Breast epithelium (tissue), 4 donors: ENCODE measurements at regions of chr7 and their contacts with region 1.

Region 1: GRCh38 chr7:81865754-81866153 is 95.9 kb upstream of the HGF start:
- DNase-seq: no peak
- H3K4me3 ChIP-seq: no peak overlapping the region
- H3K27ac ChIP-seq: no peak overlapping the region
- H3K4me1 ChIP-seq: no peaks in the 10 kb centered on the region
- H3K27me3 ChIP-seq: no peaks in the 10 kb centered on the region
- CTCF ChIP-seq: no peak
- POLR2A ChIP-seq: no peak

Region 2: DNA sequence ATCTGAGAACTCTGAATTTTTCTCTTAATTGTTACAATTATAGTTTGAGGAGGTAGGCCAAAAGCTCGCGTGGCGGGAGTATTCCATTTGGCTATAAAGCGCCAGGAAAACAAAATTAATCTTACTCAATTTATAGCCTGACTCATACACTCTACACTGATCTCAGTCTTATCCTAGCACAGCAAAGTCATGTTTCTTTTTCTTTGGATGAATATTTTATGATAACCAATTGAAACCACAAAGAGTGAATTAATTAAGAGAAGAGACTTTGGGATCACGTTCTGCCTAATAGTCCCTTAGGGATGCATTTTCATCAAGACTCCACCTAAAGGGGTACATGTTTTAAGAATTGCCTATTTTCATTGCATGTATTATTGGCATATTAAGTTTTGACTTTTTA is 516.7 kb before region 1 on chr7:
- intact Hi-C with region 1: no loop called
- DNase-seq: no peak
- H3K4me3 ChIP-seq: no peak overlapping the region
- H3K27ac ChIP-seq: no peak overlapping the region
- H3K4me1 ChIP-seq: no peaks in the 10 kb centered on the region
- H3K27me3 ChIP-seq: no peaks in the 10 kb centered on the region
- CTCF ChIP-seq: no peak
- POLR2A ChIP-seq: no peak

Region 3: GRCh38 chr7:81549484-81550016 is 316.2 kb before region 1 on chr7:
- intact Hi-C with region 1: no loop called
- DNase-seq: no peak
- H3K4me3 ChIP-seq: no peak overlapping the region
- H3K27ac ChIP-seq: no peak overlapping the region
- H3K4me1 ChIP-seq: no peaks in the 10 kb centered on the region
- H3K27me3 ChIP-seq: no peaks in the 10 kb centered on the region
- CTCF ChIP-seq: no peak
- POLR2A ChIP-seq: no peak

Region 4: DNA sequence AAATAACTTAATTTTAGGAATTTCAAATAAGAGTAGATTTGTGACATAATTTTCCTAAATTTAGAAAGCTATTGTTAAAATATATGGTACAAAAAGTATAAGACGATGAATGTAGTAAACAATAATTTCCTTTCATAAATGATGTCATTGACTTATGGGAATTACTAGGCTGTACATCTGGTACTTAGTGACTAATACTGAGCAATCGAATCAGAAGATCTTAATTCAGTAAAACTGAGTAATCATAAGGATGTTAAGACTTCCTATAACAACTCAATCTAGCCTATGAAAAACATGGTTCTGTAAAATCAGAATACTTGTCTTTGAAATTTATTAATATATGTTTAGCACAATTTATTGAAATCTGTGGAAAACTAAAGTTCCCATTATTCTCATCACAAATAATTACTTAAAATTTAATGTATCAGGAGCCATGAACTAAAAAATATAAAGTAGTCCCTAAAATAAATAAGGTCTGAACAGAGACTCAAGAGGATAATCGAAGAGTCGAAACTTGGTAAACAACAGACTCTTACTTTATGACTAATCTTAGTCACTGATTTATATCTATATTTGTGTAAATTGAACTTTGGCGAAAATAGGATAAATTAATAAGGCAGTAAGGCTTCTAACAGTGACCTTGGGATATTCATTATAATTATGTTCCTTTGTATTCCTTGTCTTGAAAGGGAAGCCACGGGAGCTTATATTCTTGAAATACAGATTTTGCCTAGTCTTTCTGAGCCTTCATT is 238.0 kb before region 1 on chr7:
- intact Hi-C with region 1: no loop called
- DNase-seq: no peak
- H3K4me3 ChIP-seq: no peak overlapping the region
- H3K27ac ChIP-seq: no peak overlapping the region
- H3K4me1 ChIP-seq: no peaks in the 10 kb centered on the region
- H3K27me3 ChIP-seq: no peaks in the 10 kb centered on the region
- CTCF ChIP-seq: no peak
- POLR2A ChIP-seq: no peak

Region 5: DNA sequence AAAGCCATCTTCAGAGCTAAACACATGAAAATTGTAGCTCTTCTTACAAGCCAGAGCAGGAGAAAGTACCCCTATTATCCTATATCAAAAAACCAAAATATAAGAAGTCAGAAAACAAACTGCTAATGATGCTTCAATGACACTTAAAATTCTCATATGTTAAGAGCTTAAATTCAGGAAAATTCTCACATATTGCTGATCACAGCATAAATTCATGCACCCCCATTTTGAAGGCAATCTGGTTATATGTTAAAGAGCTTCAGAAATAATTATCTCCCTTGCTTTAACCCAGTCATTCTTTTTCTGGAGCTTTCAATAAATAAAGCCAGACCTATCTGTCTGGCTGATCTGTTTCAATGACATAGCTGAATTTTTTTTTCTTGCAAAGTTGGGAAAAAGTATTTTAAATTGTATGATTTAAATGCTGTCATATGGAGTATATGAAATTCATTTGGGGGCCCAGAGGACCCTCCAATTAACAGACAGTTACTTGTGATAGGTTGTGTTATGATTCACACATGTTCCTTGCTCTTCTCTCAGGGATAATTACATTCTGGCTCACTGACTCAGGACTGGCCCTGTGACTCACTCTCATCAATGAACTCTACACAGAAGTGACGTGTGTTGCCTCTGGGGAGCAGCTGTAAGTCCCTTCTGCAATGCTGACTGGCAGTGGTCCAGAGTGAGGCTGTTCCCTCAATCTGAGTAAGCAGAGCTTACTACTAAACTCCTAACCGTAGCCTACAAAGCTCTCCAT is 181.1 kb before region 1 on chr7:
- intact Hi-C with region 1: no loop called
- DNase-seq: peak; percentile 83 to 88
- H3K4me3 ChIP-seq: no peak overlapping the region
- H3K27ac ChIP-seq: peak overlapping the region in 1 of 2 donors; percentile 4
- H3K4me1 ChIP-seq: peaks cover 0 to 8% of the 10 kb centered on the region in 2 donors
- H3K27me3 ChIP-seq: no peaks in the 10 kb centered on the region
- CTCF ChIP-seq: no peak
- POLR2A ChIP-seq: no peak

Region 6: GRCh38 chr7:81852701-81853100 is 13.1 kb before region 1 on chr7:
- intact Hi-C with region 1: loop called (anchors 2 kb)
- DNase-seq: no peak
- H3K4me3 ChIP-seq: no peak overlapping the region
- H3K27ac ChIP-seq: no peak overlapping the region
- H3K4me1 ChIP-seq: no peaks in the 10 kb centered on the region
- H3K27me3 ChIP-seq: no peaks in the 10 kb centered on the region
- CTCF ChIP-seq: no peak
- POLR2A ChIP-seq: no peak